Activated CD4-positive, alpha-beta memory T cell treated with anti-CD3 and anti-CD28 coated beads for 36 hours (primary cell): ENCODE measurements at regions of chr15 and their contacts with region 1.

Region 1: GRCh38 chr15:49895337-49896223 is 223.5 kb downstream of the ATP8B4 start:
- DNase-seq: no peak
- H3K4me3 Mint-ChIP-seq: no peak overlapping the region
- H3K27ac Mint-ChIP-seq: no peak overlapping the region
- H3K4me1 Mint-ChIP-seq: no peaks in the 10 kb centered on the region
- H3K27me3 Mint-ChIP-seq: peaks cover 2% of the 10 kb centered on the region

Region 2: GRCh38 chr15:49823987-49824538 is 71.5 kb before region 1 on chr15:
- CTCF ChIA-PET with region 1: no interaction called
- POLR2A ChIA-PET with region 1: no interaction called
- intact Hi-C with region 1: no loop called
- DNase-seq: no peak
- H3K4me3 Mint-ChIP-seq: no peak overlapping the region
- H3K27ac Mint-ChIP-seq: no peak overlapping the region
- H3K4me1 Mint-ChIP-seq: no peaks in the 10 kb centered on the region
- H3K27me3 Mint-ChIP-seq: no peaks in the 10 kb centered on the region

Region 3: GRCh38 chr15:49946692-49947091 is 51.1 kb after region 1 on chr15:
- CTCF ChIA-PET with region 1: no interaction called
- POLR2A ChIA-PET with region 1: no interaction called
- intact Hi-C with region 1: loop called (anchors 1 kb)
- DNase-seq: no peak
- H3K4me3 Mint-ChIP-seq: no peak overlapping the region
- H3K27ac Mint-ChIP-seq: no peak overlapping the region
- H3K4me1 Mint-ChIP-seq: no peaks in the 10 kb centered on the region
- H3K27me3 Mint-ChIP-seq: no peaks in the 10 kb centered on the region